Activated B cell treated with CpG ODN at 0.5 μM for 24 hours (primary cell): ENCODE measurements at regions of chr1 and their contacts with region 1.

Region 1: GRCh38 chr1:78607334-78607927 is 12.8 kb upstream of the IFI44L start:
- DNase-seq: no peak
- ATAC-seq: no peak
- H3K4me3 Mint-ChIP-seq: no peak overlapping the region
- H3K27ac Mint-ChIP-seq: no peak overlapping the region
- H3K4me1 Mint-ChIP-seq: no peaks in the 10 kb centered on the region
- H3K27me3 Mint-ChIP-seq: peaks cover 9% of the 10 kb centered on the region
- CTCF ChIP-seq: no peak

Region 2: DNA sequence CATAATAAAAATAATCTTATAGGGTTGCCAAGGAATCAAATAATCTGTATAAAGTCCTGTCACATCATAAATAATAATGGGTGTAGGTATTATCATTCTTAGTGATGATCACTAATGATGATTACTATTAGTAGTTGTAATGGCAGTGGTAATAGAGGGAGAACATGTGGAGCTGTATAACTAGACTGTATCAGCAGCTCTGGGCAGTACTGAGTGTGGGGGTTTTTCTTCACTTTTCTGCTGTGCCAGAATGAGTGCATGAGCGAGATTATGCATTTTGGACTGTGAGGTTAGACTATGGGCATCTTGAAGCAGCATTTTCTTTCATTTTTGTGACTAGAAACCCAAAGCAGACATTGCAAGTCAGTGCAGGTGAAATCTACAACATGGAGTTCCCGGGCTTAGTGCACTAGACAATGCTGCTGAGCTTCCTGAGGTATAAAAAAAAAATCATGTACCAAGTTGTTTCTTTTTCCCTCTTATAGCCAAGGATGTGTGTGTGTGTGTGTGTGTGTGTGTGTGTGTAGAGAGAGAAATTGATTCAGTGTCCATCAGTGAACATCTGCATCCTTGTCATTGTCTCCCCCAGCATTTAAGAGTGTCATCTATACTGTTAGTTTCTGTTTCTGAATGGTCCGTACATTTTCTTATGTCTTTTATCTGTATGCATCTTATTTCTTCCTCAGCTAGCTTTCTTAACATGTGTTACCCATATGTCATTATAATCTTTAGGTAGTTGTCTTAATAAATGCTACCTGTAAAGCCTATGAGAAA is 475.1 kb before region 1 on chr1:
- CTCF ChIA-PET with region 1: interaction called, 12 read pairs
- POLR2A ChIA-PET with region 1: no interaction called
- intact Hi-C with region 1: loop called (anchors 1 kb)
- DNase-seq: no peak
- ATAC-seq: no peak
- H3K4me3 Mint-ChIP-seq: no peak overlapping the region
- H3K27ac Mint-ChIP-seq: no peak overlapping the region
- H3K4me1 Mint-ChIP-seq: no peaks in the 10 kb centered on the region
- H3K27me3 Mint-ChIP-seq: peaks cover 4% of the 10 kb centered on the region
- CTCF ChIP-seq: no peak

Region 3: GRCh38 chr1:78527706-78528105 is 79.7 kb before region 1 on chr1:
- CTCF ChIA-PET with region 1: no interaction called
- POLR2A ChIA-PET with region 1: no interaction called
- intact Hi-C with region 1: no loop called
- DNase-seq: no peak
- ATAC-seq: no peak
- H3K4me3 Mint-ChIP-seq: no peak overlapping the region
- H3K27ac Mint-ChIP-seq: no peak overlapping the region
- H3K4me1 Mint-ChIP-seq: no peaks in the 10 kb centered on the region
- H3K27me3 Mint-ChIP-seq: no peaks in the 10 kb centered on the region
- CTCF ChIP-seq: no peak

Region 4: GRCh38 chr1:78586572-78586971 is 20.9 kb before region 1 on chr1:
- CTCF ChIA-PET with region 1: no interaction called
- POLR2A ChIA-PET with region 1: no interaction called
- intact Hi-C with region 1: no loop called
- DNase-seq: no peak
- ATAC-seq: no peak
- H3K4me3 Mint-ChIP-seq: no peak overlapping the region
- H3K27ac Mint-ChIP-seq: no peak overlapping the region
- H3K4me1 Mint-ChIP-seq: no peaks in the 10 kb centered on the region
- H3K27me3 Mint-ChIP-seq: no peaks in the 10 kb centered on the region
- CTCF ChIP-seq: no peak